ENCODE measurements at regions of chr2 and their contacts with region 1.

Region 1: GRCh38 chr2:43773876-43774613 is at the start of gene DYNC2LI1:
- DNase-seq: peak; percentile 93 to 97 (median 94)
- H3K4me3 ChIP-seq: peak within 1 kb of the TSS in 3 of 4 donors; percentile 46 to 73 (median 66)
- H3K27ac ChIP-seq: peak within 1 kb of the TSS; percentile 55 to 94 (median 90)
- H3K4me1 ChIP-seq: peaks cover 4 to 9% of the 10 kb centered on the region in 2 donors
- H3K27me3 ChIP-seq: no peaks in the 10 kb centered on the region
- CTCF ChIP-seq: peak in 1 of 6 experiments; percentile 5
- POLR2A ChIP-seq: peak; percentile 32 to 82
- total RNA-seq, gene DYNC2LI1: 16.9 to 80.5 (median 33.2) TPM

Region 2: DNA sequence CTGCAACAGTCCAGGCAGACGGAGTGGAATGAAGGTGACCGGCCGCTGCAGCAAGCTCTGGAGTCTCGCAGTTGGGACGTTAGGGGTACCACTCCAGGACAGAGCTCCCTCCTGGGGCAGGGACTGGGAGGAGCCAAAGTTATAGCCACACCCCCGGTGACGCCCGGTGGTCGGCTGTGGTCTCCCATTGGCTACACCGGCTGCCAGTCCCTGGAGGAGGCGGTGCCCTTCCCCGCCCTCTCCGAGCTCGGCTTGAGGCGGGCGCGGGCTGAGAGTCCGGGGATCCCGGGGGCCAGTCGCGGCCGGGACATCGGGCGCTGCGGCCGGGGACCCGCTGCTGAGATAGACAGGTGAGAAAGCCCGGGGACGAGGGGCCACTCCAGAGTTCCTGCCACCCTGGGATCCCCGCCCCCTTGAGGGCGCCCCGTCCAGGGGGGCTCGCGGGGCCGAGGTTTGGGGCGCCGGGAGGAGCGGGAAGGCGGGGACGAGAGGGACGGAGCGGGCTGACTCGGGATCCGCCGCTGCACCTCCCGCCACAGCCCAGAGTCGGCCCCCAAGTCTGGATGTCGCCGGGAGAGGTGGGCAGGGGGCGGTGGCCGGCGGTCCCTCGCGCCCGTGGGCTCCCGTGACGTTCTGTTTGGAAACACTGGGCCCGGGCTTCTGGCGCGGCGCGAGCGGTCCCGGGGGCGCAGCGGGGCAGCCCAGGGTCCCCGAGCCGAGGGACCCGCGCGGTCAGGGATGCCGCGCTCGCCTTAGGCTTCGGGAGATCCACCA is 136.8 kb before region 1 on chr2 and contains the start of gene PLEKHH2:
- intact Hi-C with region 1: loop called in 1 of 2 experiments (anchors 10 kb)
- DNase-seq: peak; percentile 90 to 95 (median 92)
- H3K4me3 ChIP-seq: peak within 1 kb of the TSS in 3 of 4 donors; percentile 12 to 88 (median 83)
- H3K27ac ChIP-seq: peak within 1 kb of the TSS in 3 of 5 donors; percentile 36 to 61 (median 50)
- H3K4me1 ChIP-seq: peaks cover 4% of the 10 kb centered on the region in 2 donors
- H3K27me3 ChIP-seq: no peaks in the 10 kb centered on the region
- CTCF ChIP-seq: no peak
- POLR2A ChIP-seq: peak; percentile 42 to 67
- total RNA-seq, gene PLEKHH2: 1.9 to 18.3 (median 6.3) TPM

Region 3: DNA sequence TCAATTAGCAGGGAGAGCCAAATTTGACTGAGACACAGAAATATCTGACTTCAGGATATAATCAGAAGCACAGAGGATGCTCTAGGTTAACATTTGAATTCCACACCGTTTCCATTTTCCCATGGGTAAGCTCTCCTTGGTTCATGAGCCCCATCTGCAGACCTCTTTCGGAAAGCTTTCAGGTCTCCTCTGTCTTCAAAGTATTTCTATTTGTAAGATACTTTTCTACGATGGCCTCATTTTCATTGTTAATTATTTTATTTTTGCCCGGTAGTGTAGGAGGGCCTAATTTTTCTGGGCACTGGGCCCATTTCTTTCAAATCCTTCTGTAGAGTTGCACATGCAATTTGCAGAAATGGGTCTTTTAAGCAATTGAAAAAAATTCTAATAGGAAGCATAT is 167.9 kb after region 1 on chr2:
- intact Hi-C with region 1: no loop called
- DNase-seq: no peak
- H3K4me3 ChIP-seq: no peak overlapping the region
- H3K27ac ChIP-seq: no peak overlapping the region
- H3K4me1 ChIP-seq: peaks cover 0 to 4% of the 10 kb centered on the region in 2 donors
- H3K27me3 ChIP-seq: no peaks in the 10 kb centered on the region
- CTCF ChIP-seq: no peak
- POLR2A ChIP-seq: no peak

Measured in adrenal gland (tissue), 19 donors.